ENCODE measurements at regions of chrX and their contacts with region 1.

Region 1: DNA sequence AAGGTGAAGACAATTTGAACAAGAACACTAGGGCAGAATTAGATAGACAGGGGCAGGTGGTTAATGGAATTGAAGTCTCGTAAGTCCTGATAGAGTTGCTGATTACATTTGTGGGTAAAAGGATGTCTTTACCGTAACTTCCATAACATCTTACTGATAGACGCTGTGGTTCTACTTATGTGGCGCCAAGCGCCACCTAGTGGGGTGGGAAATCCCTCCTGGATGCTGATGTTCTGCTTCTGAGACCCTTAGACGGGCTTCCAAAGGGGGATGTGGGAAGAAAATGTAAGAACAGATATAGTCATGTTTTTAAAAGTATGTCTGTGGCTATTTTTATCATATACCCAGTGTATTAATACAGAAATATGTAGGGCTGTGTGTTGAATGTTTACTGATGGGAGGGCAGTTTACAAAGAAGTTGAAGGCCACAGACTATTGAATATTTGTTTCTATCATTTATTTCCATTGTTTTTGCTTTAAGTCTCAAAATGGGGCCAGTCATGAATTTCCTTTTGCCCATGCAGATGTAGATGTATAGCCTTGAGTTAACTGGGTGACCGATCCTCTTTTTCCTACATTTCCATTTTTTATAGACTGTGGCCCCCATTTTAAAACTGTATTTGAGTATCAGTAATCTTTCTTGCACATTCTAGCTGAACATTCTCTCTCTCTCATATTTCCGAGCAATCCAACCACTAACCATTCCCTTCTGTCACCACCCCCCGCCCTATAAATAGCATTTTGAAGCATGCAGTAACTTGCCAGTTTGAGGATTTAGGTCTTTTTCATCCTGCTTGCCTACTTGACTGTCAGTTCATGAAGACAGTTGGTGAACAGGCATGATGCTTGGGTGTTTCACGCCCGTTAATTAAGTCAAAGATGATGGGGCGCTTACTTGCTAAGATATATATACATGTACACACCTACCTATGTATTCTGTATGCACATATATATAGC is 12.1 kb upstream of the TLR8 start:
- DNase-seq: peak; percentile 51
- H3K4me3 Mint-ChIP-seq: no peak overlapping the region
- H3K27ac Mint-ChIP-seq: no peak overlapping the region
- H3K4me1 Mint-ChIP-seq: peaks cover 18% of the 10 kb centered on the region
- H3K27me3 Mint-ChIP-seq: no peaks in the 10 kb centered on the region

Region 2: DNA sequence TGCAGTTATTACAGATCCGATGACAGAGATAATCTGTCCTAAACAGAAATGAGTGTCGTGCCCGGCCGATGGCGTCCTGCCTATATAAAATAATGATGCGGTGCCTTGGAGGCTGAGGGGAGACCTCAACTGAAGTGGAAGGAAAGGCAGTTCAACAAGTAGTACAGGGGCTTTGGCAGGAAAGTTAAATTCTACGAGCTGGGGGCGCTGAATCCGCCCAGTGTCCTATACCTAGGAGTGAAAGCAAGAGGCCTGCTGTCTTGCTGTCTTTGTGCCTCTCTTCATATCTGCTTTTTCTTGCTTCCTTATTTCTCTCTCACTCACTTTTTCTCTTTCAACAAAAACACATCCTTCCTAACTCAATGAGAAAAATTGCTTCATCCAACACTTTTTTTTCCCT is 185.3 kb before region 1 on chrX:
- CTCF ChIA-PET with region 1: no interaction called
- POLR2A ChIA-PET with region 1: no interaction called
- intact Hi-C with region 1: loop called (anchors 1 kb)
- DNase-seq: peak; percentile 36
- H3K4me3 Mint-ChIP-seq: no peak overlapping the region
- H3K27ac Mint-ChIP-seq: no peak overlapping the region
- H3K4me1 Mint-ChIP-seq: no peaks in the 10 kb centered on the region
- H3K27me3 Mint-ChIP-seq: no peaks in the 10 kb centered on the region

Region 3: DNA sequence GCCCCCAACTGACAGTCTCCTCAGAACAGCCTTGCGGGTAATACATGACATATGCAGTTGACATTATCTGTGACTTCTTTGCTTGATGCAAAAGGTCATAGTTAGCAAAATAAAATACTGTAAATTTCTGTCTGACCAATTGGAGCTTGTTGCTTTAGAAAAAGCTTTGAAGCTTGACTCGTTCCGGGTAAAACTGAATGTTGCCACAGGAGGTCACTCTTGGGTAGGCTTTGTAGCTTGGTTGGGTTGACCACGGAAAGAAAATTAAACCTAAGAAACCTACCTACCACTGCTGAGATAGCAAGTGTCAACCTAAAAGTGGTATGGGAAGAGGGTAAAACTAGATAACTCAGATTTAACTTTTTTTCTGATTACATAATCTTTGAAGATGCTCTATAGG is 79.9 kb before region 1 on chrX:
- CTCF ChIA-PET with region 1: interaction called, 21 read pairs
- POLR2A ChIA-PET with region 1: no interaction called
- intact Hi-C with region 1: loop called (anchors 1 kb)
- DNase-seq: peak; percentile 44
- H3K4me3 Mint-ChIP-seq: no peak overlapping the region
- H3K27ac Mint-ChIP-seq: no peak overlapping the region
- H3K4me1 Mint-ChIP-seq: no peaks in the 10 kb centered on the region
- H3K27me3 Mint-ChIP-seq: no peaks in the 10 kb centered on the region

Region 4: GRCh38 chrX:12843668-12844279 is 50.6 kb before region 1 on chrX:
- CTCF ChIA-PET with region 1: no interaction called
- POLR2A ChIA-PET with region 1: no interaction called
- intact Hi-C with region 1: loop called (anchors 1 kb)
- DNase-seq: no peak
- H3K4me3 Mint-ChIP-seq: peak overlapping the region; percentile 54
- H3K27ac Mint-ChIP-seq: peak overlapping the region; percentile 86
- H3K4me1 Mint-ChIP-seq: peaks cover 7% of the 10 kb centered on the region
- H3K27me3 Mint-ChIP-seq: no peaks in the 10 kb centered on the region

Measured in activated CD4-positive, alpha-beta memory T cell treated with anti-CD3 and anti-CD28 coated beads for 36 hours (primary cell).